ENCODE measurements at regions of chr3 and their contacts with region 1.

Region 1: GRCh38 chr3:50542177-50543034 is 25.1 kb downstream of the C3orf18 start:
- DNase-seq: peak; percentile 37
- H3K4me3 Mint-ChIP-seq: no peak overlapping the region
- H3K27ac Mint-ChIP-seq: no peak overlapping the region
- H3K4me1 Mint-ChIP-seq: no peaks in the 10 kb centered on the region
- H3K27me3 Mint-ChIP-seq: peaks cover 16% of the 10 kb centered on the region

Region 2: GRCh38 chr3:50192689-50193141 is 349.7 kb before region 1 on chr3:
- intact Hi-C with region 1: loop called (anchors 10 kb)
- DNase-seq: peak; percentile 75
- H3K4me3 Mint-ChIP-seq: no peak overlapping the region
- H3K27ac Mint-ChIP-seq: no peak overlapping the region
- H3K4me1 Mint-ChIP-seq: peaks cover 2% of the 10 kb centered on the region
- H3K27me3 Mint-ChIP-seq: peaks cover 20% of the 10 kb centered on the region

Region 3: GRCh38 chr3:50350527-50351322 is 191.7 kb before region 1 on chr3 and contains the starts of genes CYB561D2 and NPRL2:
- intact Hi-C with region 1: loop called (anchors 2 kb)
- DNase-seq: peak; percentile 99
- H3K4me3 Mint-ChIP-seq: peak within 1 kb of the TSS; percentile 91
- H3K27ac Mint-ChIP-seq: peak within 1 kb of the TSS; percentile 96
- H3K4me1 Mint-ChIP-seq: peaks cover 36% of the 10 kb centered on the region
- H3K27me3 Mint-ChIP-seq: no peaks in the 10 kb centered on the region
- total RNA-seq, gene CYB561D2: 22.9 and 24.6 TPM in 2 replicates
- total RNA-seq, gene NPRL2: 34.5 and 42.7 TPM in 2 replicates

Region 4: DNA sequence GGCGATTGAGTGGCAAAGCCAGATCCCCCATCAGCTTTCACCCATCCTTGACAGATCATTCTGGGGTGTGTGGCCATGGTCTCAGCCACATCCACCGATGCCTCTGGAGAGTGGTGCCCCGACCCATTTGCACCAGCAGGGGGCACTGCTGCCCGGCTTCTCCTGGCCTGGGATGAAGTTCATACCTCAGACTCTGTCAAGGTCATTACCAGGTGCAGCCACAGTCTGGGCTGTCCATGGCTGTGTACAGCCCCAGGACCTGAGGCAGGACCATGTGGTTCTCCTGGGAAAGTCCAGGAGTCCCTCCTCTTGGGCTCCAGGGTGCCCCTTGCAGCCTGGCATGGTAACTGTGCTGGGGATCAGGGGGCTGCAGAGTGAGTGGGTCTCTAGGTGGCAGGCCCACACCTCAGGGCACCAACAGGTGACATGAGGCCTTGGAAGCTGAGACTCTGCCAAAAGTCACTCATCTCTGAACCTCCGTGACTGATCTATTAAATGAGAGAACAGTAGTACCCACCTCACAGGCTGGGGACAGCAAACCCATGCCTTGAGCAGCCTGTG is 106.2 kb before region 1 on chr3:
- intact Hi-C with region 1: loop called (anchors 1 kb)
- DNase-seq: peak; percentile 68
- H3K4me3 Mint-ChIP-seq: no peak overlapping the region
- H3K27ac Mint-ChIP-seq: no peak overlapping the region
- H3K4me1 Mint-ChIP-seq: no peaks in the 10 kb centered on the region
- H3K27me3 Mint-ChIP-seq: no peaks in the 10 kb centered on the region

Region 5: GRCh38 chr3:50674349-50675178 is 132.2 kb after region 1 on chr3 and contains the start of gene DOCK3:
- intact Hi-C with region 1: no loop called
- DNase-seq: peak; percentile 56
- H3K4me3 Mint-ChIP-seq: peak within 1 kb of the TSS; percentile 75
- H3K27ac Mint-ChIP-seq: no peak within 1 kb of the TSS
- H3K4me1 Mint-ChIP-seq: peaks cover 12% of the 10 kb centered on the region
- H3K27me3 Mint-ChIP-seq: peaks cover 49% of the 10 kb centered on the region
- total RNA-seq, gene DOCK3: 1.1 and 1.4 TPM in 2 replicates

Region 6: GRCh38 chr3:50815867-50816266 is 273.5 kb after region 1 on chr3:
- intact Hi-C with region 1: no loop called
- DNase-seq: no peak
- H3K4me3 Mint-ChIP-seq: no peak overlapping the region
- H3K27ac Mint-ChIP-seq: no peak overlapping the region
- H3K4me1 Mint-ChIP-seq: peaks cover 4% of the 10 kb centered on the region
- H3K27me3 Mint-ChIP-seq: no peaks in the 10 kb centered on the region

Measured in activated T-helper 2 cell treated with anti-CD3 and anti-CD28 coated beads, Interferon-gamma antibody, Interleukin-2, Interleukin-4, amounts not matched to agents 10 μg/mL and 5 μg/mL and 100 μg/mL, durations not matched to agents 14 hours and 24 hours and 36 hours (primary cell).